Activated CD8-positive, alpha-beta T cell treated with anti-CD3 and anti-CD28 coated beads for 36 hours (primary cell): ENCODE measurements at regions of chr17 and their contacts with region 1.

Region 1: DNA sequence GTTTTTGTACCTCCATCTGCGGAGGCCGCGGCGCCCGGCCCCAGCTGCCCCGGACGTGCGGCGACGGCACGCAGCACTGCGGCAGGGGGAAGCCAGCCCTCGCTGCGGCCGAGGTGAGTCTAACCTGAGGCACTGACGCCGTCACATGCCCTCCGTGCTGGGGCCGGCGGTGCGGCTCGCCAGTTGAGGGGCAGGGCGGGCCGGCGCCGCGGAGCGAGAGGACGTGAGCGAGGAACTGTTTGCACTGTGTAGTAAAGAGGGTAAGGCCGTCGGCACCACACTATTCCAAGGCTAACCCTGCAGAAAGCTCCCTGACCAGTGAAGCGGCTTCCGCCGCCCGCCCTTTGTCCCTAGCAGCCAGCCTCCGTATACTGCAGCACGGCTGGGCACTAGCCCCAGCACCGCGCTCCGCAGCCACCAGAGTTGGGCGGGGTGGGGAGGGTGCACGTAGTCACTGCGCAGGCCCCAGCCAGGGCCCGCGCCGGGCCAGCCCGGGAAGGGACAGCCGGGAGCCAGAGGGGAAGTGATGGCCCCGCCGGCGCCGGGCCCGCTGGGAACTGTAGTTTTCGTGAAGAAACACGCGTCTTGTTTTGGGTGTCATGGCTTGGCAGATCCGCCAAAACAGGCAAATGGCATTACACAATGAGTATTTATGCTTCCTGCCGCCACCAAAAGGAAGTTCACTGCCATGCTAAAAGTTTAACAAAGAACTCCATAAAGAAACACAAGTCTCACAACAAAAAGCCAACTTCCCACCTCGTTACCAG is 580 bp upstream of the KANSL1 start:
- DNase-seq: peak; percentile 94
- ATAC-seq: peak; percentile 81
- H3K4me3 Mint-ChIP-seq: peak overlapping the region; percentile 81
- H3K27ac Mint-ChIP-seq: peak overlapping the region; percentile 99
- H3K4me1 Mint-ChIP-seq: peaks cover 51% of the 10 kb centered on the region
- H3K27me3 Mint-ChIP-seq: no peaks in the 10 kb centered on the region
- CTCF ChIP-seq: no peak

Region 2: GRCh38 chr17:46053911-46054534 is 139.8 kb before region 1 on chr17:
- CTCF ChIA-PET with region 1: interaction called, 15 read pairs
- POLR2A ChIA-PET with region 1: interaction called, 3 read pairs
- intact Hi-C with region 1: loop called (anchors 5 kb)
- DNase-seq: no peak
- ATAC-seq: no peak
- H3K4me3 Mint-ChIP-seq: no peak overlapping the region
- H3K27ac Mint-ChIP-seq: peak overlapping the region; percentile 66
- H3K4me1 Mint-ChIP-seq: peaks cover 60% of the 10 kb centered on the region
- H3K27me3 Mint-ChIP-seq: no peaks in the 10 kb centered on the region
- CTCF ChIP-seq: no peak

Region 3: DNA sequence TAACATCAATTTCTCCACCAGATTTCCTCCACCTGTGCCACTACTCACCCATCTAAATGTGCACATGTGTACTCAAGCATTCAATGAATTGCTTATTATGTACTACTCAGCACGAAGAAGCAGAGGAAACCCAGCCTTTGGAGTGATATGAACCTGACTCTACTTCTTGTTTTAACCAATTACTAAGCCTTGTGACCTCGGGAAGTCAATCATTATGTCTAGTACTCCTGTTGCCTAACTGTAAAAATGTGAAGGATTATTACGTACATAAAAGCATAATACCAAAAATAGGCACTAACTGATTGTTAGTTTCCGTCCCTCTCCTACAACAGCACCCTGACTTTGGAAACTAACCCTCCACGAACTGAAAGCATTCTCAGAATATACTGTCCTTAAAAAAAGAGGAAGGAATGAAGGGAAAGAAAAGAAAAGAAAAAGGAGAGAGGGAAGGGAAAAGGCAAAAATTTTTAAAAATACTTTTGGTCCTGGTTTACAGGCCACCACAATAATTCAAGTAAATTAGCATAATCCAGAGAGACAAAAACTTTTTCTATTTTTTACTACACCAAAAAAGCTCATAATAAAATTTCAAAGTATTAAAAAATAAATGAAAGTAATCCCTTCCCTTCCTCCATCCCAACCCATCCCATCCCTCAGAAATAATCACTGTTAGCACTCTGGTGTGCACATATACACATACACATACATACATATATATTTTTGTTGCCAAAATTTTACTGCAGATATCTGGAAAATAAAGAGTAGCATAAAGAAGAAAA is 54.2 kb before region 1 on chr17:
- CTCF ChIA-PET with region 1: interaction called, 10 read pairs
- POLR2A ChIA-PET with region 1: interaction called, 5 read pairs
- intact Hi-C with region 1: loop called (anchors 5 kb)
- DNase-seq: no peak
- ATAC-seq: no peak
- H3K4me3 Mint-ChIP-seq: no peak overlapping the region
- H3K27ac Mint-ChIP-seq: no peak overlapping the region
- H3K4me1 Mint-ChIP-seq: peaks cover 87% of the 10 kb centered on the region
- H3K27me3 Mint-ChIP-seq: no peaks in the 10 kb centered on the region
- CTCF ChIP-seq: no peak

Region 4: GRCh38 chr17:46154151-46154816 is 39.5 kb before region 1 on chr17:
- CTCF ChIA-PET with region 1: interaction called, 5 read pairs
- POLR2A ChIA-PET with region 1: interaction called, 4 read pairs
- intact Hi-C with region 1: loop called (anchors 5 kb)
- DNase-seq: peak; percentile 45
- ATAC-seq: peak; percentile 32
- H3K4me3 Mint-ChIP-seq: peak overlapping the region; percentile 32
- H3K27ac Mint-ChIP-seq: peak overlapping the region; percentile 78
- H3K4me1 Mint-ChIP-seq: peaks cover 84% of the 10 kb centered on the region
- H3K27me3 Mint-ChIP-seq: no peaks in the 10 kb centered on the region
- CTCF ChIP-seq: no peak

Region 5: DNA sequence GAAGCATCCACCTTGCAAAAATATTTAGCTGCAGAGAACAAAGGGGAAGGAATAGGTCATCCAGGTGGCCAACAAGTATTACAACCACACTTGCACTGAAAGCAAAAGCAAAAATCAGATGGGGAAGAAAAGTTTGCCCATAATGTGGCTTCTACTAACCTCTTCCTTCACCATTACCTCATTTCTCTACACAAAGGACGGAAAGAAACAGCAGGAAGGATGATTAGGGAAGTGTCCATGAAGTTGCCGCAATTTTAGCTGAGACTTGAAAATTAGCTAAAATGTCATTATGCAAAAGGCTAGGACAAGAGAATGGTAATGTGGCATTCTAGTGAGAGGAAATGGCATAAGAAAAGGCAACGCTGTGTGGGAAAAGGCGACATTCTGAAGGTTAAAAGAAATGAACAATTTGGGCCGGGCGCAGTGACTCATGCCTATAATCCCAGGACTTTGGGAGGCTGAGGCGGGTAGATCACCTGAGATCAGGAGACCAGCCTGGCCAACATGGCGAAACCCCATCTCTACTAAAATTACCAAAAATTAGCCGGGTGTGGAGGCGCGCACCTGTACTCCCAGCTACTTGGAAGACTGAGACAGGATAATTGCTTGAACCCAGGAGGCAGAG is 14.3 kb before region 1 on chr17:
- CTCF ChIA-PET with region 1: interaction called, 24 read pairs
- POLR2A ChIA-PET with region 1: interaction called, 6 read pairs
- intact Hi-C with region 1: no loop called
- DNase-seq: no peak
- ATAC-seq: peak; percentile 61
- H3K4me3 Mint-ChIP-seq: peak overlapping the region; percentile 50
- H3K27ac Mint-ChIP-seq: peak overlapping the region; percentile 89
- H3K4me1 Mint-ChIP-seq: peaks cover 86% of the 10 kb centered on the region
- H3K27me3 Mint-ChIP-seq: no peaks in the 10 kb centered on the region
- CTCF ChIP-seq: no peak